ENCODE measurements at regions of chr9 and their contacts with region 1.

Region 1: GRCh38 chr9:98263482-98264357 is 8.3 kb upstream of the TBC1D2 start:
- DNase-seq: peak; percentile 79
- ATAC-seq: peak; percentile 98
- H3K4me3 ChIP-seq: no peak overlapping the region
- H3K27ac ChIP-seq: no peak overlapping the region
- H3K4me1 ChIP-seq: no peaks in the 10 kb centered on the region
- H3K27me3 ChIP-seq: no peaks in the 10 kb centered on the region
- CTCF ChIP-seq: peak; percentile 88

Region 2: DNA sequence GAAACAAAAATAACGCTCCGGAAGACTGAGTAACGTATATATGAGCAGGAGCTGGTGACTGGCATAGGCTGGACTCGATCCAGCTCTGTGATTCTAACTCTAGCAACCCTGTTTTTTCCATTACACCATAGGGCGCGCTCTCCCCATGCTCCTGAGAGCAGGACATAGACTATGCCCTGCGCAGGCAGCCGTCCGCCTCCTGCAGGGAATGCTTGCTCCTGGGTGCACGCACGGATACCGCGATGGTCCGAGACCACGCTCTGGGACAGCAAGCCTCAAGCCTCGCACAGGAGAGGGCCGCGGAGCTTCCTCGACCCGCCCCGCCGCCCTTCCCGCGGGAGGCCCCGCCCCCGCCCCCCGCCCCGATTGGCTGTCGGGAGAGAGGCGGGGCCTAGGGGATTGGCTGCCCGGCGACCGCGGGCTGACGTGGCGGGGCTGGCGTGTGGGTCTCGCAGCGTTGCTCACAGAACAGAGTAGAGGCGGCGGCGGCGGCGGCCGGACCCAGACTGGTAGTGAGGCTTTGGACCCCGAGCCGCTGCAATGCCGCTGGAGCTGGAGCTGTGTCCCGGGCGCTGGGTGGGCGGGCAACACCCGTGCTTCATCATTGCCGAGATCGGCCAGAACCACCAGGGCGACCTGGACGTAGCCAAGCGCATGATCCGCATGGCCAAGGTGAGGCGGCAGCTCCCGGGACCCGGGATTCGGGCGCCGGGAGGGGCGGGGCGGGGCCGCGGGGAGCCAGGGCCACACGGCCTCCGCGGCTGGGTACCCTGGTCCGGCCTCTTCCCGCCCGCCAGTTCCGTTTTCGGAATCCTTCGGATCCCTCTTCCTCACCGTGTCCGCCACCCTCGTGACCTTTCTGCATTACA is 207.2 kb before region 1 on chr9 and contains the start of gene NANS:
- CTCF ChIA-PET with region 1: no interaction called
- POLR2A ChIA-PET with region 1: no interaction called
- intact Hi-C with region 1: no loop called
- DNase-seq: peak; percentile 89
- ATAC-seq: peak; percentile 94
- H3K4me3 ChIP-seq: peak within 1 kb of the TSS; percentile 97
- H3K27ac ChIP-seq: peak within 1 kb of the TSS; percentile 77
- H3K4me1 ChIP-seq: peaks cover 12% of the 10 kb centered on the region
- H3K27me3 ChIP-seq: no peaks in the 10 kb centered on the region
- CTCF ChIP-seq: no peak
- total RNA-seq, gene NANS: 93.0 and 94.8 TPM in 2 replicates

Region 3: GRCh38 chr9:98074115-98074990 is 189.4 kb before region 1 on chr9:
- CTCF ChIA-PET with region 1: no interaction called
- POLR2A ChIA-PET with region 1: no interaction called
- intact Hi-C with region 1: loop called (anchors 2 kb)
- DNase-seq: peak; percentile 70
- ATAC-seq: peak; percentile 28; the same call in 1 of the 2 replicates
- H3K4me3 ChIP-seq: no peak overlapping the region
- H3K27ac ChIP-seq: no peak overlapping the region
- H3K4me1 ChIP-seq: peaks cover 7% of the 10 kb centered on the region; the same call in 1 of the 2 replicates
- H3K27me3 ChIP-seq: no peaks in the 10 kb centered on the region
- CTCF ChIP-seq: peak; percentile 89

Region 4: GRCh38 chr9:98118640-98119601 is 144.8 kb before region 1 on chr9 and contains the start of gene TRIM14:
- CTCF ChIA-PET with region 1: no interaction called
- POLR2A ChIA-PET with region 1: no interaction called
- intact Hi-C with region 1: loop called (anchors 2 kb)
- DNase-seq: peak; percentile 62
- ATAC-seq: peak; percentile 81
- H3K4me3 ChIP-seq: peak within 1 kb of the TSS; percentile 88
- H3K27ac ChIP-seq: peak within 1 kb of the TSS; percentile 30
- H3K4me1 ChIP-seq: peaks cover 16% of the 10 kb centered on the region
- H3K27me3 ChIP-seq: no peaks in the 10 kb centered on the region
- CTCF ChIP-seq: peak; percentile 47; the same call in 1 of the 2 replicates
- total RNA-seq, gene TRIM14: 11.2 and 17.3 TPM in 2 replicates

Region 5: DNA sequence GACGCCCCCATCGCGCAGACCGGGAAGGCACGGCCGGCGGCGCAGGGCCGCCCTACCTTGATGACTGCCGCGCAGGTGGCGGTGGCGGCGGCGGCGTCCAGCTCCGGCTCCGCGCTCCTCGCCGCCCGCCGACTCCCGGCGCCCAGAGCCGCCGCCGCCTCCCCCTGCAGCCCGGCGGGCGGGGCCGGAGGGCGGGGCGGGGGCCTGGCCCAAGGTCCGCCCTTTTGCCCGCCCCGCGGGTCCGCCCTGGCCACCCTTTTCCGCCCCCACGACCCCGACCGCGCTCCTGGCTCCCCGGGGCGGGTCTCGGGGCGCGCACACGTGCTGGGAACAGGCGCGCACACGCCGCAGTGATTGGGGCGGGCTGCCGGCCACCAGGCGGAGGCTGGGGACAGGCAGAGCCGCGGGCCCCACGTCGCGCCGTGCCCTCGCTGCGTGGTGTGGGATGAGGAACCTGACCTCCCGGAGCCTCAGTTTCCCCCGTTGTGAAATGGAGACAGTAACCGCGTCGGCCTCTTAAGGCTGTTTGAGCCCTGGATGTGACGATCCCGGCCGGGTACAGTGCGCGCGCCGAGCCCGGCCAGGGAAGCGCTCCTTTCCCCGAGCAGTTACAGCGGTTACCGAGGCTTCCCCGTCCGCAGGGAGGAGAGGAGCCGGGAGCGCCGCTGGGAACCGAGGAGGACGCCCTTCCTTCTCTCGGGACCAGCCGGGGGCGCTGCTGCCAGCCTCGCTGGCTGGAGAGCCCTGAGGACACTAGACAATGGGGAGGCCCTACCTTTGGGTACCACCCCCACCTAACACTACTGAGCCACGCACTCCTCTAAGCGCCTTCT is 71.0 kb before region 1 on chr9 and contains the start of gene CORO2A:
- CTCF ChIA-PET with region 1: no interaction called
- POLR2A ChIA-PET with region 1: no interaction called
- intact Hi-C with region 1: loop called (anchors 5 kb)
- DNase-seq: peak; percentile 67
- ATAC-seq: peak; percentile 76
- H3K4me3 ChIP-seq: peak within 1 kb of the TSS; percentile 78
- H3K27ac ChIP-seq: no peak within 1 kb of the TSS; the same call in 1 of the 2 replicates
- H3K4me1 ChIP-seq: no peaks in the 10 kb centered on the region; the same call in 1 of the 2 replicates
- H3K27me3 ChIP-seq: no peaks in the 10 kb centered on the region
- CTCF ChIP-seq: peak; percentile 51
- total RNA-seq, gene CORO2A: 2.2 and 2.8 TPM in 2 replicates

Region 6: GRCh38 chr9:98204692-98205091 is 59.0 kb before region 1 on chr9:
- CTCF ChIA-PET with region 1: interaction called, 5 read pairs
- POLR2A ChIA-PET with region 1: no interaction called
- intact Hi-C with region 1: loop called (anchors 1 kb)
- DNase-seq: no peak
- ATAC-seq: no peak
- H3K4me3 ChIP-seq: no peak overlapping the region
- H3K27ac ChIP-seq: no peak overlapping the region
- H3K4me1 ChIP-seq: no peaks in the 10 kb centered on the region
- H3K27me3 ChIP-seq: no peaks in the 10 kb centered on the region
- CTCF ChIP-seq: no peak

Region 7: GRCh38 chr9:98215821-98216220 is 47.9 kb before region 1 on chr9:
- CTCF ChIA-PET with region 1: no interaction called
- POLR2A ChIA-PET with region 1: no interaction called
- intact Hi-C with region 1: no loop called
- DNase-seq: peak; percentile 17
- ATAC-seq: peak; percentile 58; the same call in 1 of the 2 replicates
- H3K4me3 ChIP-seq: no peak overlapping the region
- H3K27ac ChIP-seq: no peak overlapping the region
- H3K4me1 ChIP-seq: peaks cover 18% of the 10 kb centered on the region
- H3K27me3 ChIP-seq: no peaks in the 10 kb centered on the region
- CTCF ChIP-seq: peak; percentile 57